Upper lobe of right lung (tissue), 1 donor: ENCODE measurements at regions of chr7 and their contacts with region 1.

Region 1: DNA sequence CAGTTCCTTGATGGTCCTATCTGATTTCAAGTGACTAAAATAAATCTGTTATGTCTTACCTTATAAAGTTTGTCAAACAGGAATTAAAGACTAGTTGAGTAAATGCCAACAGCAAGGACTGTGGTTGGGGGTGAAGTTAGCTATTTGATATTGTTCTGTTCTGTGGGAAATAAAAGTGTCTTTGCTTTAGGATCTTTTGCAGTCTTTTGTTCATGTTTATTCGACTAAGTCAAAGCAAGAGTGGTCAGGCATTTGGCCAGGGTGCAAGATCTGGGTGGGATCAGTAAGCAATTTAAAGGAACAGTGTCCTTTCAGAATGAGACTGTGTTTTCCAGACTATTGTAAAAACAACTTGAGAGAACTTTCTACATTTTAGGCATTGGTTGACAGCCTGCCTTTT is at the start of gene COL28A1:
- DNase-seq: no peak
- ATAC-seq: no peak
- H3K4me3 ChIP-seq: no peak within 1 kb of the TSS
- H3K27ac ChIP-seq: no peak within 1 kb of the TSS
- H3K4me1 ChIP-seq: no peaks in the 10 kb centered on the region
- H3K27me3 ChIP-seq: no peaks in the 10 kb centered on the region
- CTCF ChIP-seq: no peak
- total RNA-seq, gene COL28A1: 0.61 TPM

Region 2: GRCh38 chr7:7257899-7258692 is 277.6 kb before region 1 on chr7:
- intact Hi-C with region 1: no loop called
- DNase-seq: no peak
- ATAC-seq: peak; percentile 58
- H3K4me3 ChIP-seq: peak overlapping the region; percentile 43
- H3K27ac ChIP-seq: peak overlapping the region; percentile 67
- H3K4me1 ChIP-seq: peaks cover 18% of the 10 kb centered on the region
- H3K27me3 ChIP-seq: no peaks in the 10 kb centered on the region
- CTCF ChIP-seq: no peak

Region 3: DNA sequence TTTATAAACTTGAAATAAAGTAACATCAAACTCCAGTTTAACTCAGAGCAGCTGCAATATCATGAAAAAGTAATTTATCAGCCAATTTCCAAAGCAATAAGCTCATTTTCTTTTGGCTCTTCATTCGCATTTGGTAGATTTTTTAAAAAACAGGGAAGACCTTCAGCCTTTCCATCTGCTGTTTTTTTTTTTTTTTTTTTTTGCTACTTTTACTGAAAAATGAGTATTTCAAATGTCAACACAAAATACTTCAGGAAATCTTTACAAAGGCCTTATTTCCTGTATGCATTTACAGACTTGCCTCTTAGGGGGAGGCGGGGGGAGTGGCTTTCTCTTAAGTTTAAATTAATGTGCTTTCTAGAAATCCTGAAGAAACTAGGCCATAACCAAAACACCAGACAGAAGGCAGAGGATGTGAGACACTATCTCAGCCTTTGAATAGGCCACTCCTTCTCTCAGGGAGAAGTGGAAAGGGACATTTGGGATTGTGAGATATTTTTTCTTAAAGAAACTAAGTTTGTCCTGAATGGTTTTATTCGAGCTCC is 91.8 kb before region 1 on chr7:
- intact Hi-C with region 1: loop called (anchors 10 kb)
- DNase-seq: no peak
- ATAC-seq: no peak
- H3K4me3 ChIP-seq: no peak overlapping the region
- H3K27ac ChIP-seq: no peak overlapping the region
- H3K4me1 ChIP-seq: no peaks in the 10 kb centered on the region
- H3K27me3 ChIP-seq: no peaks in the 10 kb centered on the region
- CTCF ChIP-seq: no peak

Region 4: DNA sequence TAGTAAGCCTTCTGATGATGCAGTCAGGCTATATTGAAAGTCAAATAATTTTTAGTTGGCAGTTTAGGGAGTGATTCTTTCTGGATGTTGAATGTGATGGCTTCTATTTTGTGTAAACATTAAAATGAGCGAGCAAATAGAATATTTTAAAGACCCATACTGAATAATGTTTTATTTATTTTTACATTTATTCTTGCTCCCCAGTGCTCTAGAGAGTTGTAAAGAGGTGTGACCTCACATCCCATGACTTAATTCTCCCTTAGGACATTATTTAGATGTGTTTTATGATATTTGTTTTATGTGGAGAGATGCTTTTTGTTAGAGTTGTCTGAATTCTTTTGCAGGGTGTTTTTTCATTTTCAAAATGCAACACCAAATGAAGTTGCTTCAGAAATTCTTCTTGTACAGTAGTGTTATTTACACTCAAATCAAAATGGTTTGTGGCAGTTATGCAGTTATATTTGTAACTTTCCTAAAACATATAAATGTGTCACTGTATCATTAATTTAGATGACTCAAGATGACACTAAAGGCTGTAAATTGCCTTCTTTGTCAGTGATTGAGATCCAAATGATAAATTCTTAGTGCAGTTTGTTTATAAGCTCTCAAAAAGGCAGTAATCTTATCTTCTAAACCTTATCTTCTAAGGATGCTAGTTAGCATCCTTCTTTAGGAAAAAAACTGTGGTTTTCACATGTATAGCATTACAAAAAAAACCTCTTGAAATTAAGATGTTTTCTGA is 117.3 kb after region 1 on chr7:
- intact Hi-C with region 1: no loop called
- DNase-seq: no peak
- ATAC-seq: no peak
- H3K4me3 ChIP-seq: no peak overlapping the region
- H3K27ac ChIP-seq: no peak overlapping the region
- H3K4me1 ChIP-seq: peaks cover 4% of the 10 kb centered on the region
- H3K27me3 ChIP-seq: no peaks in the 10 kb centered on the region
- CTCF ChIP-seq: no peak

Region 5: DNA sequence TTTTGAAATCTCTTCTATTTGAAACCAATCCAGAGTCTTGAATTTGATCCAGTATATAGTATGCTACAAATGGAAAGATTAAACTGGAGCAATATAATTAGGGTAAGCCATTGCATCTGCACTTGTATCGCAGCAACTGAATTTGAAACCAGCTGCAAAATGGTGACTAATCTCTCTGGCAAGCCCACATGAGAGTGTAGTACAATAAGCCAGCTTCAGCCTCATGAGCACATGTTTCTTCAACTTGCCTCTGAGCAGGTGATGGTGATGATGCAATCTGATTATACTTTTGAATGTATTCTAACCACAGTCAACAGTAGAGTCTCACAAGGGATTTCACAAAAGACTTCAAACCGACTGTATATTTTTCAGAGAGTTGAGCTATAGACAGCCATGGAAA is 183.5 kb after region 1 on chr7:
- intact Hi-C with region 1: no loop called
- DNase-seq: no peak
- ATAC-seq: peak; percentile 88
- H3K4me3 ChIP-seq: no peak overlapping the region
- H3K27ac ChIP-seq: no peak overlapping the region
- H3K4me1 ChIP-seq: no peaks in the 10 kb centered on the region
- H3K27me3 ChIP-seq: no peaks in the 10 kb centered on the region
- CTCF ChIP-seq: no peak